Transverse colon (tissue), 4 donors: ENCODE measurements at regions of chr1 and their contacts with region 1.

Region 1: GRCh38 chr1:46724991-46725735 is 6.2 kb upstream of the EFCAB14 start:
- DNase-seq: peak; percentile 77
- H3K4me3 ChIP-seq: no peak overlapping the region
- H3K27ac ChIP-seq: no peak overlapping the region
- H3K4me1 ChIP-seq: peaks cover 0 to 3% (median 0%) of the 10 kb centered on the region in 4 donors
- H3K27me3 ChIP-seq: peaks cover 27% of the 10 kb centered on the region
- CTCF ChIP-seq: peak; percentile 80 to 87 (median 85)
- EP300 ChIP-seq: no peak
- POLR2A ChIP-seq: no peak

Region 2: DNA sequence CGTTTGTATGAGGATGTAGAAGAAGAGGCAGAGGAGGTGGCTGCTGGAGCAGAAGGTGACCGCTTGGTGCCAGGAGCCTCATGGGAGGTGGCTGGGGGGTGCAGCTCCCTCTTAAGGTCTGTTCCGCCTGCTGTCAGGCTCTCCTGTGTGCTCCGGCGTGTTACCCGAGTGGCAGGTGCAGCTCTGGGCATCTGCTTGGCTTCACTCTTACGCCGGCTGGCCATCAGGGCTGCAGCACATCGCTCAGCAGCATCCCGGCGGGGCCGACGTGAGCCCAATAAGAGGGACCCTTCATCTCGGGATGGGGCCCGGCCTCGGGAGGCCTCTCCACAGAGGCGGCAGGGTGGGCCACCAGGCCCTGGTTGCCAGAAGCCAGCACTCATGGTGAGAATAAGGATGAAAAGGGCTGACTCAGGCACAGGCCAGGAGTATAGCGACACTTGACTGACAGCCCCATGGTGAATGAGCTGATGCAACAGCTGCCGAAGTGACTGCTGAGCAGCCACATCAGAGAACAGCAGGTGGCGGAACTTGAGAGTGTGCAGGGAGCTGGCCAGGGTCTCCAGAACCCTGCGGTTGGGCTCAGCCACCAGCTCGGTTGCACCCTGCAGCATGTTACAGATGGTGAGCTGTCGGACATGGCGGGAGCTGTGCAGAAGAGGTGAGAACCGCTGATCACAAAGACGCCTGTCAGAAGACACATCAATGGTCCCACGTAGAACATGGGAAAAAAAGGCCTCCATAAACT is 439.3 kb before region 1 on chr1:
- in situ Hi-C with region 1: no loop called
- intact Hi-C with region 1: loop called (anchors 5 kb)
- DNase-seq: no peak
- H3K4me3 ChIP-seq: no peak overlapping the region
- H3K27ac ChIP-seq: no peak overlapping the region
- H3K4me1 ChIP-seq: no peaks in the 10 kb centered on the region
- H3K27me3 ChIP-seq: no peaks in the 10 kb centered on the region
- CTCF ChIP-seq: no peak
- EP300 ChIP-seq: no peak
- POLR2A ChIP-seq: no peak

Region 3: GRCh38 chr1:46466477-46467182 is 258.5 kb before region 1 on chr1:
- in situ Hi-C with region 1: loop called in 2 of 4 experiments (anchors 25 kb)
- intact Hi-C with region 1: no loop called
- DNase-seq: no peak
- H3K4me3 ChIP-seq: peak overlapping the region; percentile 39 to 67 (median 54)
- H3K27ac ChIP-seq: no peak overlapping the region
- H3K4me1 ChIP-seq: peaks cover 5 to 11% (median 9%) of the 10 kb centered on the region in 4 donors
- H3K27me3 ChIP-seq: peaks cover 49% of the 10 kb centered on the region
- CTCF ChIP-seq: no peak
- EP300 ChIP-seq: no peak
- POLR2A ChIP-seq: no peak

Region 4: DNA sequence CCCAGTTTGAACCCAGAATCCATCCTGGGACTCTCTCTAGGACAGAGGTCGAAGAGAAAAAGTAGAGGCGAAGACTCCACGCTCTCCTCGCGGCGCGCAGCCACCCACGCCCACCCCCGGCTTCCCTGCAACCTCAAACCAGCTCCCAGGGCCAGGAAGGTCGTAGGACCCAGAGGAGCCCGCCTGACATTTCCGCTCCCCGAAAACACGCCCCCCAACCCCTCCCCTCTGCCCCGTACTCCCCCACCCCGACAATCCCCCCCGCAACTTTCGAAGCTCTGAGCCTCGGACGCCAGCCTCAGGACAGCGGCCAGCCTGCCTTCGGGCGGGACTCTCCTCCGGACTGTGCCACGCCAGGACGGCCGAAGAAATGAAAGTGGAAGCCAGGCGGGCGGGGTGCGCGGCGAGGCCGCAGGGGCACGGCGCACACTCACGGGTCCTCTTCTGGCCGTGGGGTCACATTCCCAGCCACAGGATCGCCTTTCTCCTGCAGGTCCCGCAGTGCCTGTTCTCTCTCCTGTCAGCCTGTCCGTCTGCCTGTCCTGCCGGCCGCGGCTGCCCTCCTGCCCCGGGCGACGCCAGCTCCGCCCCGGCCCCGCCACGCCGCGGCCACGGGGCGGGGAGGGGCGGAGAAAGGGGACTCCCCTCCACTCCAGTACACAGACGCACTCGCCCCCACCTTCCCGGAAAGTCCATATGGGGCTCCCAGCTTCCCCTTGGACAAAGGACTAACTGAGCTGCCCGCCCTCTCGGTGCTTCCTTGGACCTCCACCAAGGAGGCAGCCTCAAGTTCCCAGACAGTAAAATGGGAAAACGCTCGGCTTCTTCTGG is 108.7 kb before region 1 on chr1 and contains the start of gene MOB3C:
- in situ Hi-C with region 1: loop called in 2 of 4 experiments (anchors 10 kb)
- intact Hi-C with region 1: no loop called
- DNase-seq: peak; percentile 85
- H3K4me3 ChIP-seq: peak within 1 kb of the TSS; percentile 63 to 88 (median 81)
- H3K27ac ChIP-seq: peak within 1 kb of the TSS; percentile 90 to 97 (median 94)
- H3K4me1 ChIP-seq: peaks cover 31 to 50% (median 43%) of the 10 kb centered on the region in 4 donors
- H3K27me3 ChIP-seq: no peaks in the 10 kb centered on the region
- CTCF ChIP-seq: no peak
- EP300 ChIP-seq: no peak
- POLR2A ChIP-seq: peak; percentile 54
- total RNA-seq, gene MOB3C: 12.9 to 20.6 (median 14.8) TPM

Region 5: DNA sequence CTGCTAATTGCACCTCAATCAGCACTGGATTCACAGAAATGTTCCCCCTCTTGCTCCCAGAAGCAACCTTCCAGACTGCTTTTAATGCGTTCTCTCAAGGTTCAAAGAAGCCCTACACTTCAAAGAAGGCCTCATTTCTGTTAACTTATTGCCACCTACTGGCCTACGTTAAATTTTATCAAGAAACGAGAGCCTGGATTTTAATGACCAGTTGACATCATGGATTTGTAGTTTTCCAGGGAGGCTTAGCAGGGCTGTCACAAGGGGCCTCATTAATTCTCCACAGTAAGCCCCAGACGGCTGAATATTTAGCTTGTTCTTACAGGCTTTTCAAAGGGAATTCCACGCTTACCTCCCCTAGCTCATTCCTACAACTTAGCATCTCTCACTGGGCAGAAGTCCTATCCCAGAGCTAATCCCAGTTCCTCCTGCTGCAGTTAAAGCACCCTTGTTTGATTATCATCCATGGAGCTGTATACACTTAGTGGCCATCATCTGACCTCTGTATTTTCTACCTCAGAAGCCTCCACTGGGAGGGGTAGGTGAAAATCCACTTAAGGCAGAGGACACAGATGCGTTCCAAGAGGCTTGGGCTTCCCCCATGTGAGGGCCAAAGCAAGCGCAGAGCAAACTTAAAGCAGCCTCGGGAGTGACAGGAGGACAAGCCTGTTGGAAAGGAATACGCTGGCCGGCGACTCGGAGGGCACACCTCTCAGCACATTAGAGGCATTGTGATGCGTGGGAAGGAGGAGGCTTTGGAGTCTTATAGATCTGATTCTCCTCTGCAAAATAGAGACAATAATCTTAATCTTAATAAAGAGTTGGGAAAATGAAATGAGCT is 266.1 kb after region 1 on chr1:
- in situ Hi-C with region 1: loop called in 1 of 4 experiments (anchors 25 kb)
- intact Hi-C with region 1: no loop called
- DNase-seq: no peak
- H3K4me3 ChIP-seq: no peak overlapping the region
- H3K27ac ChIP-seq: no peak overlapping the region
- H3K4me1 ChIP-seq: no peaks in the 10 kb centered on the region
- H3K27me3 ChIP-seq: no peaks in the 10 kb centered on the region
- CTCF ChIP-seq: peak in 4 of 5 experiments; percentile 28 to 43 (median 36)
- EP300 ChIP-seq: no peak
- POLR2A ChIP-seq: no peak